ENCODE measurements at regions of chr14 and their contacts with region 1.

Region 1: DNA sequence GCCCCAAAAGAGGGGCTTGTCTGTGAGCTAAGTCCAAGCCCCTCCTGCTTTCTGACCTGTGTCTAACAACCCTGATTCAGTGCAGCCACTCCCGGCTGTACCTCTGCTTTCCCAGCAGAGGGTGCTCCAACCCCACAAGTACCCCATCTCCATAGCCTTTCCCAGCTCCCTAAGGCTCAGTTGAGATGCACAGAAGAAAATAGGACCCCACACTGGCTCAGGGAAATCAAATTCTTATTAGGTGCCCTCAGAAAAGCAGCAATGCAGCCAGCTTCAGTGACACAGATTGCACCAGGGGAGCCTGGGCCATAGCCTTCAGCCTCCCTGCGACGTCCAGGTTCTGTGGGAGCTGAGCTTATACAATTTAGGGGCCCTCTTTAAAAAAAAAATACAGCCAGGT is 49.9 kb downstream of the LRRC74A start:
- DNase-seq: peak; percentile 24
- H3K4me3 ChIP-seq: no peak overlapping the region
- CTCF ChIP-seq: peak; percentile 92

Region 2: GRCh38 chr14:76654573-76655090 is 221.4 kb before region 1 on chr14:
- CTCF ChIA-PET with region 1: no interaction called
- POLR2A ChIA-PET with region 1: no interaction called
- DNase-seq: no peak
- H3K4me3 ChIP-seq: no peak overlapping the region
- CTCF ChIP-seq: no peak

Region 3: GRCh38 chr14:76894308-76894892 is 18.3 kb after region 1 on chr14:
- CTCF ChIA-PET with region 1: interaction called, 109 read pairs
- POLR2A ChIA-PET with region 1: no interaction called
- DNase-seq: no peak
- H3K4me3 ChIP-seq: no peak overlapping the region
- CTCF ChIP-seq: no peak

Region 4: GRCh38 chr14:77023001-77023996 is 147.2 kb after region 1 on chr14:
- CTCF ChIA-PET with region 1: interaction called, 17 read pairs
- POLR2A ChIA-PET with region 1: no interaction called
- DNase-seq: no peak
- H3K4me3 ChIP-seq: peak overlapping the region; percentile 92
- CTCF ChIP-seq: peak; percentile 36

Region 5: GRCh38 chr14:77053046-77053841 is 177.2 kb after region 1 on chr14:
- CTCF ChIA-PET with region 1: interaction called, 105 read pairs
- POLR2A ChIA-PET with region 1: no interaction called
- DNase-seq: no peak
- H3K4me3 ChIP-seq: no peak overlapping the region
- CTCF ChIP-seq: peak; percentile 92

Region 6: DNA sequence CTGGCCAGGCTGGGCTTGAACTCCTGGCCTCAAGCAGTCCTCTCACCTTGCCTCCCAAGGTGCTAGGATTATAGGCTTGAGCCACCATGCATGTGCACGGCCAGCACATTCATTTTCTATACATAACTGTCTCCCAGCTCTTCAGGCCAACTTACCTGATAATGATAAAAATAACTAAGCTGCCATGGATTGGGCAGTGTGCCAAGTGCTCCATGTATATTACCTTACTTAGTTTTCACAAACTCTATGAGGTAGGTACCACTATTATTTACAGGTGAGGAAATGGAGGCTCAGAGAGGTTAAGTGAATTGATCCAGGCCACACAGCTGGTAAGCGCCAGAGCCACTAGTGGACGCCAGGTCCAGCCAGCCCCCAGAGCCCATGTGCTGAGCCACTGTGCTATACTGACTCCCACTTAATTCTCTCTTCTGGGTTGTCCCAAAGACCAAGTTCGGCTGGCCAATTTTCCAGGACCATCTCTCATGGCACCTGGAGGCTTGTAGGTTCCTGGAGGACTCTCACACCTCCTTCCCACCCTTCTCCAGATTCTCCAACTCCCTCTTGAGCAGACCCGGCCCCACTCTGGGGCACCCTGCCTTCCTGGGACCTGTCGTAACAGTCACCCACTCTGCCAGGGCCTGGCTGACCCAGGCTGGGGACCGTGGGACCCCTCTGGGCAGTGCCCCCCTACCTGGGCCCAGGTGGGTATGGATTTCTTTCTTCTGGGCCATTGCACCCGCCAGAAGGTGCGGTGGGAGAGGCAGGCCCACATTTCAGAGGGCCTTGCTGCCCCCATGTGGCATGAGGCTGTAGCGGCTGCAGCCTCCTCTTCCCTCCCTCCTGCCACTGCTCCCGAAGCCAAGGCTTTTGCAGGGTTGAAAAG is 191.8 kb after region 1 on chr14:
- CTCF ChIA-PET with region 1: interaction called, 1,065 read pairs
- POLR2A ChIA-PET with region 1: interaction called, 5 read pairs
- DNase-seq: no peak
- H3K4me3 ChIP-seq: no peak overlapping the region
- CTCF ChIP-seq: peak; percentile 97

Region 7: DNA sequence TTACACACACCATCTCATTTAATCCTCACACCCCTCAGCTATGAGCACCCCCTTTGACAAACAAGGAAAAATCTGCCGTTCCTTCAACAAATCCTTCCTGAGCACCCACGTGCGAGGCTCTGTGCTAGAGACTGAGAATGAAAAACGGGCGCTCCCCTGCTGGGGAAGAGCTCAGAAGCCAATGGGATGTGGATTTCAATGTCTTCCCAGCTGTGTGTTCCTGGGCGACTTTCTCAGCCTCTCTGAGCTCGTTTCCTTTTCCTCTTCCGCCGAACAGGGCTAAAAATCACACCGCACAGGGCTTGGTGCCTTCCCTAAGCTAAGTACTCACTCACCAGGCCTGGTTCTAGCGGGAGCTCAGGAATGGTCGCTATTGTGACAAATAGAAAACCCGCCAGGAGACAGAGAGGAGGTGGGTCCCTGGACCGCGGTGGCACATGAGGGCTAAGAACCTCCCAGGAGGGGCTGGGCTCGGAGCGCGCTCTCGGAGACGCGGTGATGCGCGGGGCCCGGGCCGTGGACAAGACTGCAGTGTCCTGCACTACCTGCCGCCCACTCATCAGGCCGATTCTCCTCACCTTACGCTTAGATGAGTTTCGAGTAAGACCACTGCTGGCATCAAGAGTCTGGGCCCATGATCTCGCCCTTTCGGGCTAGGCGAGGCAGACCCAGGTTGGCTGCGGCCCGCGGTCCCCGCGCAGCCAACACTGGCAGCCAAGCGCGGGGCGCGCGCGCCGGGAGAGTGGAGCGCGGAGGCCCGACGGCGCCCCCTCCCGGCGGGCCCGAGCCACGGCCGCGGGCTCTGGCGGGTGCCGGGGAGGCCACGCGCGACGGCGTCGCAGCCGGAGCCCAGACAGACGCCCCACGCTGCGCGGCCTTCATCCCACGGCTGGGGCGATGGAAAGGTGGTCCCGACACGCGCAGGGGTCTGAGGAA is 248.5 kb after region 1 on chr14:
- CTCF ChIA-PET with region 1: interaction called, 72 read pairs
- POLR2A ChIA-PET with region 1: no interaction called
- DNase-seq: no peak
- H3K4me3 ChIP-seq: peak overlapping the region; percentile 58
- CTCF ChIP-seq: peak; percentile 16

Region 8: DNA sequence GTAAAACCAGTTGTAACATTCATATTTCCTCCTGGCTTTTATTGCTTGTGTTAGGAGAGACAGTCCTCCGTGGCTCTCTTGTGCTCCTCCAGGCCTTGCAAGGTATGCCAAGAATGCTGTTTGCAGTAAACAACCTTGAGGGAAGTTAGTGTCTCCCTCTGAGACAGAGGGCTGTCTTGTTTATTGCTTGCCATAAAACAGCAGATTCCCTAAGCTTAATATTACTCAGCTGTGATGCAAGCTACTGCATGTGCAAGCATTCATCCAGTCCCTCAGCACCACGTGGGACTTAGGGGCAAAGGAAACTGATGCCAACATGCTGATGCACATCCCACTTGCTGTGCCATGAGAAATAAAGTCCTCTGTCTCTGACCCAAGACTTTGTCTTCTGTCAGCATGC is 438.0 kb after region 1 on chr14:
- CTCF ChIA-PET with region 1: interaction called, 39 read pairs
- POLR2A ChIA-PET with region 1: no interaction called
- DNase-seq: peak; percentile 80
- H3K4me3 ChIP-seq: no peak overlapping the region
- CTCF ChIP-seq: no peak

Measured in AG04449 (cell line).